ENCODE measurements at regions of chr4 and their contacts with region 1.

Region 1: DNA sequence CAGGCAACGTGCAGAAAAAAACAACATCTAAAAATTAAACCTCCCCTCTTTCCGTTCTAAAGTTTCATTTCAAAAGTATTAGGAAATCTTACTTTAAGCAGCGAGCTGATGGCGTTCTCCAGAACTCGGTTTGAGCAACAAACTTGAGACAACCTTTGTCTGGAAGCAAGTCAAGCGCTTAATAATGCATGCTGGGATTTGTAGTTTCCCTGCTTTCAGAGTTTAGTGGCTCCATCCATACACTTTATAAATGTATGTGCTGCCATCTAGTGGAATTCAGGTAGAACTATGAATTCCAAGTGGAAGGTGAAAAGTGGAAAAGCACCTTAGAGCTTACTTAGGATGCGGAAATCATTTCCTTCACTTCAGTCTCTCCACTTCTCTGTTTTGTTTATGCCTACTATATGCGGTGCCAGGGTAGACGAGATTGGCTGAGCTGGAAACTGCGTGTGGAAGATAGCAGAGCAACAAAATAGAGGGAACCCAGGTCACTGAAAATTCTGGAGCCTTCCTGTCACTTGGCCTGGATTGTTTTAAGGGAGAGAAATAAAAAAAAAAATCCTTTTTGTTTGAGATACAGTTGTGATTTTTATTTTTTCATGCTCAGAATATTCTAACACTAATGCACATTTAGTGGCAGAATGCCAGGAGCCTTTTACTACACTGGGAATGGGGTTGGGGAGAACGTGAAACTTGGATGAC is at the start of gene BDH2:
- DNase-seq: peak; percentile 69 to 84 (median 76)
- ATAC-seq: peak; percentile 94
- H3K4me3 ChIP-seq: peak within 1 kb of the TSS; percentile 27
- H3K27ac ChIP-seq: no peak within 1 kb of the TSS
- H3K4me1 ChIP-seq: no peaks in the 10 kb centered on the region
- H3K27me3 ChIP-seq: no peaks in the 10 kb centered on the region
- CTCF ChIP-seq: peak; percentile 55 to 89 (median 68); a peak in 5 of 6 replicates
- EP300 ChIP-seq: no peak
- POLR2A ChIP-seq: no peak
- RAD21 ChIP-seq: peak; percentile 74 to 78
- polyA plus RNA-seq, gene BDH2: 9.9 to 10.7 TPM

Region 2: GRCh38 chr4:102255454-102255853 is 844.4 kb before region 1 on chr4:
- CTCF ChIA-PET with region 1: no interaction called
- POLR2A ChIA-PET with region 1: no interaction called
- in situ Hi-C with region 1: no loop called
- intact Hi-C with region 1: loop called (anchors 10 kb)
- DNase-seq: no peak
- ATAC-seq: no peak
- H3K4me3 ChIP-seq: no peak overlapping the region
- H3K27ac ChIP-seq: no peak overlapping the region
- H3K4me1 ChIP-seq: no peaks in the 10 kb centered on the region; a peak in 1 of 5 replicates
- H3K27me3 ChIP-seq: no peaks in the 10 kb centered on the region
- CTCF ChIP-seq: no peak
- EP300 ChIP-seq: no peak
- POLR2A ChIP-seq: no peak
- RAD21 ChIP-seq: no peak

Region 3: GRCh38 chr4:102430461-102430910 is 669.4 kb before region 1 on chr4:
- CTCF ChIA-PET with region 1: interaction called, 11 read pairs
- POLR2A ChIA-PET with region 1: no interaction called
- in situ Hi-C with region 1: no loop called
- intact Hi-C with region 1: loop called (anchors 5 kb)
- DNase-seq: peak in 2 of 4 experiments; percentile 10 to 25
- ATAC-seq: peak; percentile 56
- H3K4me3 ChIP-seq: peak overlapping the region; percentile 49
- H3K27ac ChIP-seq: peak overlapping the region; percentile 71; the same call in 2 of the 3 replicates
- H3K4me1 ChIP-seq: no peaks in the 10 kb centered on the region; a peak in 1 of 5 replicates
- H3K27me3 ChIP-seq: no peaks in the 10 kb centered on the region
- CTCF ChIP-seq: no peak
- EP300 ChIP-seq: no peak
- POLR2A ChIP-seq: no peak
- RAD21 ChIP-seq: no peak

Region 4: GRCh38 chr4:102868781-102869568 is 230.9 kb before region 1 on chr4 and contains the start of gene CISD2:
- CTCF ChIA-PET with region 1: no interaction called
- POLR2A ChIA-PET with region 1: no interaction called
- in situ Hi-C with region 1: no loop called
- intact Hi-C with region 1: no loop called
- DNase-seq: peak; percentile 85 to 95 (median 88)
- ATAC-seq: peak; percentile 83
- H3K4me3 ChIP-seq: peak within 1 kb of the TSS; percentile 59
- H3K27ac ChIP-seq: peak within 1 kb of the TSS; percentile 98
- H3K4me1 ChIP-seq: peaks cover 8 to 10% of the 10 kb centered on the region in 2 experiments
- H3K27me3 ChIP-seq: no peaks in the 10 kb centered on the region
- CTCF ChIP-seq: no peak; a peak in 2 of 6 replicates
- EP300 ChIP-seq: peak; percentile 27; the same call in 1 of the 2 replicates
- POLR2A ChIP-seq: peak; percentile 90
- RAD21 ChIP-seq: no peak
- polyA plus RNA-seq, gene CISD2: 87.2 to 91.4 TPM

Region 5: GRCh38 chr4:103934178-103934789 is 834.4 kb after region 1 on chr4:
- CTCF ChIA-PET with region 1: no interaction called
- POLR2A ChIA-PET with region 1: no interaction called
- in situ Hi-C with region 1: no loop called
- intact Hi-C with region 1: loop called (anchors 5 kb)
- DNase-seq: peak; percentile 14 to 61 (median 26)
- ATAC-seq: peak; percentile 73
- H3K4me3 ChIP-seq: no peak overlapping the region
- H3K27ac ChIP-seq: no peak overlapping the region
- H3K4me1 ChIP-seq: no peaks in the 10 kb centered on the region; a peak in 1 of 5 replicates
- H3K27me3 ChIP-seq: no peaks in the 10 kb centered on the region
- CTCF ChIP-seq: peak; percentile 18 to 61 (median 46); a peak in 2 of 6 replicates
- EP300 ChIP-seq: no peak
- POLR2A ChIP-seq: no peak
- RAD21 ChIP-seq: peak; percentile 51 to 56

Measured in K562 (cell line).